Natural killer cell (primary cell): ENCODE measurements at regions of chr14 and their contacts with region 1.

Region 1: DNA sequence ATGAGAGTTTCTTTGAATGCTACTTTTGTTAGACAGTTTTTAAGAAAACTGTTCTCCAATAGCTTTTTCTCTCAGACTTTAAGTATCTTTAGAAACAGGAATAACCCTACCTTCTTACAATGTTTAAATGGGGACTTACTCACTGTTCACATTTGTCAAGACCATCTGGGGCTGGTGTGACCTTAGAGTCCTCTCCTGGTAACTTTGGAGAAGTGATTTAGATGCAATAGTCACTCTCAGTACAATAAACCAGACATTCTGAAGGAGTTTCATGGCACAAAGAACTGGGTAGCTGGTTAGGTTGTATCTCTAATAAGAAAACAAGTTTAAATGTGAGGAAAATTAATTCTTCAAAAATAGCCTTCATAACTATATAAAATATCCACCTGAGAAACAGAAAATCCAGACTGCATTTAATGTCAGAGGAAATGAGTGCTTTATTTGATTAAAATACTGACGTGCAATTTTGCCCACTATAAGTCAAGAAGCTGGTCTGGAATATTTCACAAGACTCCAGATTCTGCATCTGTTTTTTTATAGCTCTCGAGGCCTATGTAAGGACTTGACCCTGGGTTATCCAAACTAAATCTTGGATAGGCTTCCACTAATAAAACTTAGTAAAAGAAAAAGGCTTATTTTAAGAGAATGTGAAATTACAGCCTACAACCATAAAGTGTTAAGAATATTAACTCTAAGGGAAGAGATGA is 108.7 kb downstream of the PTGER2 start:
- DNase-seq: peak in 1 of 2 donors; percentile 7
- ATAC-seq: peak in 1 of 3 donors; percentile 38
- H3K4me3 ChIP-seq: no peak overlapping the region
- H3K4me3 Mint-ChIP-seq: no peak overlapping the region
- H3K27ac ChIP-seq: no peak overlapping the region
- H3K27ac Mint-ChIP-seq: no peak overlapping the region
- H3K4me1 ChIP-seq: no peaks in the 10 kb centered on the region
- H3K4me1 Mint-ChIP-seq: peaks cover 7 to 8% of the 10 kb centered on the region in 2 donors
- H3K27me3 ChIP-seq: peaks cover 2% of the 10 kb centered on the region
- H3K27me3 Mint-ChIP-seq: no peaks in the 10 kb centered on the region
- CTCF ChIP-seq: no peak

Region 2: GRCh38 chr14:52299692-52300278 is 123.0 kb before region 1 on chr14:
- intact Hi-C with region 1: loop called (anchors 5 kb)
- DNase-seq: peak in 1 of 2 donors; percentile 74
- ATAC-seq: peak; percentile 81 to 82 (median 81)
- H3K4me3 ChIP-seq: no peak overlapping the region
- H3K4me3 Mint-ChIP-seq: no peak overlapping the region
- H3K27ac ChIP-seq: no peak overlapping the region
- H3K27ac Mint-ChIP-seq: peak overlapping the region in 1 of 2 donors; percentile 82
- H3K4me1 ChIP-seq: peaks cover 6% of the 10 kb centered on the region
- H3K4me1 Mint-ChIP-seq: peaks cover 49 to 59% of the 10 kb centered on the region in 2 donors
- H3K27me3 ChIP-seq: no peaks in the 10 kb centered on the region
- H3K27me3 Mint-ChIP-seq: no peaks in the 10 kb centered on the region
- CTCF ChIP-seq: peak; percentile 79

Region 3: DNA sequence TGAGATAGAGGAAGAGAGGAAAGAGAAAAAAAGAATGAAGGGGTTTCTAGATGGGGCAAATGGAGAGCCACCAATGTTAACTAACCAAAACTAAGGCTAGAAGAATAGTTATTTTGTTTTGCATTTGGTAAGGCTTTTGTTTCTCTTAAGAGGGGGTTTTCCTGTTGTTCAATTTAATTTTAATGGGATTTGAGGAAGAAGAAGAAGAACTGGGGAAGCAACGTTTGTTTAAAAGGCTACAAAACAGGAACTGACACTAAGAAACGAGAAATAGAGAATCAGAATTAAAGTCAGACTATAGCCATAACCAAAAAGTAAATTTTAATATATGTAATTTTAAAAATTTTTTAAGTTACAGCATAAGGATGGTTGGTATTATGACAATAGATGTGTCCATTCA is 115.8 kb after region 1 on chr14:
- intact Hi-C with region 1: no loop called
- DNase-seq: no peak
- ATAC-seq: no peak
- H3K4me3 ChIP-seq: no peak overlapping the region
- H3K4me3 Mint-ChIP-seq: no peak overlapping the region
- H3K27ac ChIP-seq: no peak overlapping the region
- H3K27ac Mint-ChIP-seq: no peak overlapping the region
- H3K4me1 ChIP-seq: no peaks in the 10 kb centered on the region
- H3K4me1 Mint-ChIP-seq: peaks cover 0 to 10% of the 10 kb centered on the region in 2 donors
- H3K27me3 ChIP-seq: no peaks in the 10 kb centered on the region
- H3K27me3 Mint-ChIP-seq: no peaks in the 10 kb centered on the region
- CTCF ChIP-seq: no peak